Naive thymus-derived CD4-positive, alpha-beta T cell (primary cell): ENCODE measurements at regions of chr17 and their contacts with region 1.

Region 1: GRCh38 chr17:73595479-73595878 is 48.8 kb downstream of the SDK2 start:
- DNase-seq: peak in 5 of 9 donors; percentile 17 to 34 (median 28)
- ATAC-seq: no peak
- H3K4me3 ChIP-seq: no peak overlapping the region
- H3K4me3 Mint-ChIP-seq: peak overlapping the region in 1 of 10 donors; percentile 85
- H3K27ac ChIP-seq: peak overlapping the region; percentile 20
- H3K27ac Mint-ChIP-seq: peak overlapping the region in 7 of 9 donors; percentile 45 to 97 (median 93)
- H3K4me1 ChIP-seq: peaks cover 37 to 59% of the 10 kb centered on the region in 2 donors
- H3K4me1 Mint-ChIP-seq: peaks cover 33 to 74% (median 65%) of the 10 kb centered on the region in 7 donors
- H3K27me3 ChIP-seq: no peaks in the 10 kb centered on the region
- H3K27me3 Mint-ChIP-seq: no peaks in the 10 kb centered on the region

Region 2: DNA sequence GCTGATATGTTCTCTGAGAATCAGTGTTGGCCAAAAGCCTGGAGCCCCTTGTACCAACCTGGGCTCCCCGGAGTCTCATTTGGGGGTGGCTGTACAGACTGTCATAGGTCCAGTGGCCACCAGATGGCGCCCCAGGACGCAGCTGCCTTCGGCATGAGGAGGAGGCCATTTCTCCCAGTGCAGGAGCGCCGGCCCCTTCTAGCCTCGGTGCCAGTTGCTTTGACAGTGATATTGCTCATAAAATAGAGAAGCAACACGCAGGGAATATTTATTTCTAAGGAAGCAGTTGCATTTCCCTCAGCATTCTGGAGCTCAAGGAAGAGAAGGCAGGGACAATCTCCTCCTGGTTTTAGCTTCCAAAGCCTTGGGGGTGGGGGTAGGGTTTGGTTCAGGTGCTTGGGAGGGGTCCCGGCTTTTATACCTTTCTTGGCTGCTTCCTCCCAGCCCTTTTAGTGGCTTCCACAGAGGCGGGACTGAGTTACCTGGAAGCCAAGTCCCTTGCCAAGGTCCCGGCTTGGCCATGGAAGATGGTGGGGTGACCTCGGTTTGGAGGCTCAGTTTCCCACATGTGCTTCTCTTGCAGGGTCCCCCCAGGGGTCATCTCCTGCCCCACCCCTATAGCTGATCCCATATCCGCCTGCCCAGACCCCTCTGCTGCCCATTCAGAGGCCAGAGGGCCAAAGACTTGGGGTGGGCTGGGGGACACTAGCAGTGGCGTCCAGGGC is 165.9 kb before region 1 on chr17:
- CTCF ChIA-PET with region 1: interaction called, 4 read pairs
- POLR2A ChIA-PET with region 1: interaction called, 3 read pairs
- intact Hi-C with region 1: loop called in 1 of 2 experiments (anchors 1 kb)
- DNase-seq: peak; percentile 68 to 90 (median 82)
- ATAC-seq: peak; percentile 96
- H3K4me3 ChIP-seq: no peak overlapping the region
- H3K4me3 Mint-ChIP-seq: peak overlapping the region in 7 of 10 donors; percentile 27 to 64 (median 37)
- H3K27ac ChIP-seq: no peak overlapping the region
- H3K27ac Mint-ChIP-seq: peak overlapping the region in 3 of 9 donors; percentile 1 to 55 (median 17)
- H3K4me1 ChIP-seq: no peaks in the 10 kb centered on the region
- H3K4me1 Mint-ChIP-seq: peaks cover 0 to 17% (median 15%) of the 10 kb centered on the region in 7 donors
- H3K27me3 ChIP-seq: no peaks in the 10 kb centered on the region
- H3K27me3 Mint-ChIP-seq: peaks cover 0 to 2% (median 0%) of the 10 kb centered on the region in 5 donors

Region 3: GRCh38 chr17:73566905-73567782 is 28.3 kb before region 1 on chr17:
- CTCF ChIA-PET with region 1: interaction called, 6 read pairs
- POLR2A ChIA-PET with region 1: interaction called, 4 read pairs
- intact Hi-C with region 1: loop called in 1 of 2 experiments (anchors 1 kb)
- DNase-seq: peak in 6 of 9 donors; percentile 42 to 61 (median 53)
- ATAC-seq: peak; percentile 77
- H3K4me3 ChIP-seq: no peak overlapping the region
- H3K4me3 Mint-ChIP-seq: peak overlapping the region in 9 of 10 donors; percentile 15 to 69 (median 48)
- H3K27ac ChIP-seq: peak overlapping the region; percentile 61
- H3K27ac Mint-ChIP-seq: peak overlapping the region; percentile 29 to 92 (median 89)
- H3K4me1 ChIP-seq: peaks cover 7 to 9% of the 10 kb centered on the region in 2 donors
- H3K4me1 Mint-ChIP-seq: peaks cover 9 to 33% (median 27%) of the 10 kb centered on the region in 7 donors
- H3K27me3 ChIP-seq: no peaks in the 10 kb centered on the region
- H3K27me3 Mint-ChIP-seq: peaks cover 0 to 5% (median 0%) of the 10 kb centered on the region in 5 donors

Region 4: GRCh38 chr17:73710095-73710592 is 114.7 kb after region 1 on chr17:
- CTCF ChIA-PET with region 1: no interaction called
- POLR2A ChIA-PET with region 1: no interaction called
- intact Hi-C with region 1: loop called (anchors 2 to 5 kb)
- DNase-seq: peak; percentile 40 to 81 (median 62)
- ATAC-seq: peak; percentile 83
- H3K4me3 ChIP-seq: no peak overlapping the region
- H3K4me3 Mint-ChIP-seq: peak overlapping the region in 5 of 10 donors; percentile 1 to 40 (median 34)
- H3K27ac ChIP-seq: no peak overlapping the region
- H3K27ac Mint-ChIP-seq: peak overlapping the region in 5 of 9 donors; percentile 12 to 88 (median 72)
- H3K4me1 ChIP-seq: peaks cover 0 to 11% of the 10 kb centered on the region in 2 donors
- H3K4me1 Mint-ChIP-seq: peaks cover 11 to 19% (median 17%) of the 10 kb centered on the region in 7 donors
- H3K27me3 ChIP-seq: no peaks in the 10 kb centered on the region
- H3K27me3 Mint-ChIP-seq: peaks cover 0 to 19% (median 0%) of the 10 kb centered on the region in 5 donors

Region 5: GRCh38 chr17:73956669-73957465 is 361.4 kb after region 1 on chr17:
- CTCF ChIA-PET with region 1: no interaction called
- POLR2A ChIA-PET with region 1: no interaction called
- intact Hi-C with region 1: loop called in 1 of 2 experiments (anchors 5 kb)
- DNase-seq: peak; percentile 18 to 65 (median 49)
- ATAC-seq: peak; percentile 70
- H3K4me3 ChIP-seq: no peak overlapping the region
- H3K4me3 Mint-ChIP-seq: no peak overlapping the region
- H3K27ac ChIP-seq: no peak overlapping the region
- H3K27ac Mint-ChIP-seq: no peak overlapping the region
- H3K4me1 ChIP-seq: no peaks in the 10 kb centered on the region
- H3K4me1 Mint-ChIP-seq: peaks cover 0 to 4% (median 0%) of the 10 kb centered on the region in 7 donors
- H3K27me3 ChIP-seq: no peaks in the 10 kb centered on the region
- H3K27me3 Mint-ChIP-seq: peaks cover 3 to 7% (median 4%) of the 10 kb centered on the region in 5 donors